Natural killer cell (primary cell): ENCODE measurements at regions of chr20 and their contacts with region 1.

Region 1: DNA sequence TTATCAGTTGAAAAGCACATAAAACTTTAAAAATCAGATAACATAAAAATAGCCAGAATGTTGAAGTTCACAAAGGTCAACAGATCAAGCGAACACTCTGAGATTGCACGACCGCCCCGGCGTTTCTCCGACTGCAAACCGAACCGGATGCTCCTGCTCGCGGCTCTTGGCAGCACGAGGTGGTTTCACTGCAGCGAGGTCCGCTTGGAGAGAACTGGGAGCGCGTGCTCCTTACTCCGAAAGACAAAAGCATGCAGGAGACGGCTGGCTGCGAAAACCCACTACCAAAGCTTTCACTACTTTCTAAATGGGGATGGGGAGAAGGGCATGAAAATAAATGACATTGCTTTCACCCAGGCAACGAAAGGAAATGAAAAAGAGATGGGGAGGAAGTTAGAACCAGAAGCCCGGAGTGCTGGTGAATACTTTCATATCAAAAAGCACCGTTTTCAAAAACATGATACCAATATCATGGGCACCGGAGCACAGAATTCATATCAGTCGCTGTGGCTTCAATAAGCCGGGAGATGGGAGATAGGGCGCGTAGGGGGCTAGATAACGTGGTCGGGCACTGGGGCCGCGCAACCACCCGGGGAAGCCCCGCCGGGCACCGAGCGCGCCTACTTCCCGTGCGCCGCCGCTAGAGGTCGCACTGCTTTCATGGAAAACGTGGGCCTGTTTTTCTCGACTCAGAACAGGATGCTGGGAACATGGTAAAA is 8.3 kb upstream of the ANKRD60 start:
- DNase-seq: peak; percentile 78 to 89
- ATAC-seq: peak; percentile 92 to 94 (median 93)
- H3K4me3 ChIP-seq: peak overlapping the region; percentile 54
- H3K4me3 Mint-ChIP-seq: peak overlapping the region; percentile 92
- H3K27ac ChIP-seq: peak overlapping the region; percentile 7
- H3K27ac Mint-ChIP-seq: peak overlapping the region; percentile 85 to 93
- H3K4me1 ChIP-seq: no peaks in the 10 kb centered on the region
- H3K4me1 Mint-ChIP-seq: peaks cover 12 to 14% of the 10 kb centered on the region in 2 donors
- H3K27me3 ChIP-seq: no peaks in the 10 kb centered on the region
- H3K27me3 Mint-ChIP-seq: no peaks in the 10 kb centered on the region
- CTCF ChIP-seq: peak; percentile 99

Region 2: GRCh38 chr20:58447511-58448391 is 211.0 kb after region 1 on chr20:
- intact Hi-C with region 1: loop called (anchors 1 kb)
- DNase-seq: peak in 1 of 2 donors; percentile 74
- ATAC-seq: peak in 2 of 3 donors; percentile 53 to 55
- H3K4me3 ChIP-seq: no peak overlapping the region
- H3K4me3 Mint-ChIP-seq: no peak overlapping the region
- H3K27ac ChIP-seq: no peak overlapping the region
- H3K27ac Mint-ChIP-seq: peak overlapping the region in 1 of 2 donors; percentile 31
- H3K4me1 ChIP-seq: no peaks in the 10 kb centered on the region
- H3K4me1 Mint-ChIP-seq: peaks cover 8 to 13% of the 10 kb centered on the region in 2 donors
- H3K27me3 ChIP-seq: no peaks in the 10 kb centered on the region
- H3K27me3 Mint-ChIP-seq: no peaks in the 10 kb centered on the region
- CTCF ChIP-seq: peak; percentile 43

Region 3: GRCh38 chr20:58692594-58693226 is 455.9 kb after region 1 on chr20 and contains the start of gene NPEPL1:
- intact Hi-C with region 1: loop called (anchors 10 kb)
- DNase-seq: peak; percentile 73 to 83
- ATAC-seq: peak; percentile 94 to 96 (median 96)
- H3K4me3 ChIP-seq: peak within 1 kb of the TSS; percentile 25
- H3K4me3 Mint-ChIP-seq: peak within 1 kb of the TSS; percentile 77
- H3K27ac ChIP-seq: peak within 1 kb of the TSS; percentile 81
- H3K27ac Mint-ChIP-seq: peak within 1 kb of the TSS; percentile 80 to 86
- H3K4me1 ChIP-seq: peaks cover 22% of the 10 kb centered on the region
- H3K4me1 Mint-ChIP-seq: peaks cover under 1 to 7% of the 10 kb centered on the region in 2 donors
- H3K27me3 ChIP-seq: no peaks in the 10 kb centered on the region
- H3K27me3 Mint-ChIP-seq: no peaks in the 10 kb centered on the region
- CTCF ChIP-seq: no peak
- total RNA-seq, gene NPEPL1: 66.0 to 83.7 (median 68.4) TPM